RWPE1 (cell line): ENCODE measurements at regions of chr11 and their contacts with region 1.

Region 1: DNA sequence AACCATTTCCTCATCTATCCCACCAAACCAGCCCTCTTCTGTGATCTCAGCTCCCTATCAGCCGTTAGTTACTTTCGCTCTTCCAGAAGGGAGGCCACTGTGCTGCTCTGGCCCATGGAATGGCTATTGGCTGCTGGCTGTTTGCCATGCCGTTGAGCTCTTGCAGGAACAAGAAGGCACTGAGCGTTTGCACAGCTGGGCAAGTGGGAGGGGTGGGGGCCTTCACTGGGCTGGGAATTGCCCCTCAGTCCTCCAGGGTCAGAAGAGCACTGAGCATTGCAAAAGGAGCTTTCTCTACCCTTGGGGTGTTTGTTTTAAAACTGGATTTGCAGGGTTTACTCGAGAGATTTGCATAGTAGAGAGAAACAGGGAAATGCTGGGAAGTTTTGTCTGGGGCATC is 129.0 kb upstream of the PARVA start:
- DNase-seq: no peak
- H3K27ac ChIP-seq: peak overlapping the region; percentile 42
- CTCF ChIP-seq: no peak

Region 2: DNA sequence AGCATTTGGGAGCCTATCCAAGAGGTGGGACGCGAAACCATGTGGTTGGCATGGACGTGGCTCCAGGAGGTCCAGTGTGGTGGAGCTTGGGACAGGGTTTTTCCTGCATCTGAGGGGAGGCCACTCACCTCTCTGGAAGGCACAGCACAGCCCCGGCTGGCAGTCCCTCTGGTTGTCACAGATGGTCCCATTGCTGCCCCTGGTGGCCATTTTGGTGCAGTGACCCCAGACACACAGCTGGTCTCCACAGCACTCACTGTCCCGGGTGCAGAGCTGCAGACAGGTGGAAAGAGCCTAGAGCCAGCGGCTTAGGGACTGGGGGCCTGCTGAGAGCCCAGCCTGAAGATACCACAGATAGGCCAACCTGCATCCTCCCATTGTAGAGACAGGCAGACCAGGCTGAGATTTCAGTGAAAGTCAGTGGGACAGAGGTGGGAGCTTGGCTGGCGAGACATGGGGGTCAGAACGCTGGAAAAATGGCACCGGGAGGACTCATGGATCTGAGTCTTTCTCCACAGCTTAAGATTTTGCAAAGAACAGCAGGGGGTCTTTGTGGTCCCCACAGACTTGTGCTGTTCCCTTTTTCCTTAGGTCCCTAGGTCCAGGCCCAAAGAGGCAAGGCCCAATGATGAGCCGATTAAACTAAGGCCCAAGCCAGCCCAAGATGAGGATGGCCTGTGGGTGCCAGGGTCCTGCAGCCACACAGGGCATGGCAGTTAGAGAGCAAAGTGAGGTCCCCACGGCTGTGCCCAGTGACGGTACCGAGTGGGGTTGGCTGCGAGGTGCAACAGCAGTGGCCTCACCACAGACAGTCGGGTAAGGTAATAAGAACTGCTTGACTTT is 281.3 kb before region 1 on chr11:
- CTCF ChIA-PET with region 1: no interaction called
- POLR2A ChIA-PET with region 1: no interaction called
- DNase-seq: peak; percentile 54
- H3K27ac ChIP-seq: peak overlapping the region; percentile 55
- CTCF ChIP-seq: peak; percentile 69

Region 3: DNA sequence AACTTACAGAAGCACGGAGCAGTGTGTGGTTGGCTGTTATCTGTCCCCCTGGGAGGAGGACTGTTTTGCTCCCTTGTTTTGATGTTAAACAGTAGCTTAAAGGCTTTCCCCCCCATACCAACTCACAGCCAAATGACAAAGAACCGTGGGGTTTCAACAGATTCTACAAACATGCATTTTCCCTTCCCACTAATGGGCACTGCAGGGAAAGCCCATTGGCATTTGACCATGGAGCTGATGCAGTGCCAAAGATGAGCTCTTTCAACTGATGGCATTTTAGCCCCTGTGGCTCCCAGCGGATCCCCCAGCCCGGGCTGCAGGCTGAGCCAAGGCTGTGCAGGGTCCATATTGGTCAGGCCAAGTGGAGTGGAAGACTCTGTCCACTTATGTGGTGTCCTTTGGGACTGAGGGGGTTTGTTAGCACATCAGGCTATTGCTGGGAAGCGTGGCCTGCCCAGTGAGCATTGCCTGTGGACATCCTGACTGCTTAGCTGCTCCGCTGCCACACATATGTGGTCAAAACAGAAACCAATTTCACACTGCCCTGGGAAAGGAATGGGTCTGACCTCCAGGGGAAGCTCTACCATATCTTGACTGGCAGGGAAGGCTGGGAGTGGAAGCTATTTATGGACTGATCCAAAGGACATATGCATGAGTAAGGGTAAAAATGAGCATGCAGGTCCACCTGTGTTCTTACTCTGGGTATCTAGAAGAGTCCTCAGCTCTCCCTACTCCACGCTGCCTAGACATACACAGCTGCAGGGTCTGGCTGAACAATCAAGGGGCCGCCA is 12.6 kb after region 1 on chr11:
- CTCF ChIA-PET with region 1: interaction called, 12 read pairs
- POLR2A ChIA-PET with region 1: no interaction called
- DNase-seq: no peak
- H3K27ac ChIP-seq: peak overlapping the region; percentile 22; the same call in 1 of the 2 replicates
- CTCF ChIP-seq: no peak

Region 4: DNA sequence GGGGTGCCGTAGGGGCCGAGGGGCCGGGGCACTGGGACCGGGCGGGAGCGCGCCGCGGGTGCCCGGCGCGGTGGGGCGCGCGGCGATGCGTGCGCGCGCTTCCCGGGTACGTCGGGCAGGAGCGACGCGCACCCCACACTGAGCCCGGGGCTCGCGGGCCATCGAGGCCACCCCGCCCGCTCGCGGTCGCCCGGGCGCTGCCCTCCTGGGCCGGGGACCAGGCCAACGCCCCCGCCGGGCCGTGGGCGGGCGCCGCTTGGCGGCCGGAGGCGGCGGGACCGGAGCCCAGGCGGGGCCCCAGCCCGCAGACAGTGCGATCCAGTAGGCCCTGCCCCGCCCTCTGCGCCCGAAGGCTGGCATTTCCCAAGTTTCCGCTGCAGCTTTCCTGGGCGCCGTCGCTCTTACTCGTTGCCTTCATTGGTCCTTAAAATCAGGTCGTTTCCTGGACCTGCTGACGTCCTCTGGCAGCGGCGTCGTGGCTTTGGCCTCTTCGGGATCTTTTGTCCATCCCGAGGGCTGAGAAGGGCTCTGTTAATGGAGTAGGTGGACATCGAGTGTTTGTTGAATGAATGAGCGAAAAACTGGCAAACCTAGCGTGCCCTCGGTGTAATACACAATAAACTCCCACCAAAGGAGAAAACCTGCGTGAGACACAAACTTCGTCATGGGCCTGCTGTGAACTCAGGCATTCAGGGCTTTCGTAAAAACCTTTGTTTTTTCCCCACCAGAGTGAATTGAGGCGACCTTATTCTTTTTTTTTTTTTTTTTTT is 129.7 kb after region 1 on chr11:
- CTCF ChIA-PET with region 1: no interaction called
- POLR2A ChIA-PET with region 1: no interaction called
- DNase-seq: peak; percentile 69
- H3K27ac ChIP-seq: peak overlapping the region; percentile 91
- CTCF ChIP-seq: peak; percentile 57